Gastrocnemius medialis (tissue), 4 donors: ENCODE measurements at regions of chr7 and their contacts with region 1.

Region 1: DNA sequence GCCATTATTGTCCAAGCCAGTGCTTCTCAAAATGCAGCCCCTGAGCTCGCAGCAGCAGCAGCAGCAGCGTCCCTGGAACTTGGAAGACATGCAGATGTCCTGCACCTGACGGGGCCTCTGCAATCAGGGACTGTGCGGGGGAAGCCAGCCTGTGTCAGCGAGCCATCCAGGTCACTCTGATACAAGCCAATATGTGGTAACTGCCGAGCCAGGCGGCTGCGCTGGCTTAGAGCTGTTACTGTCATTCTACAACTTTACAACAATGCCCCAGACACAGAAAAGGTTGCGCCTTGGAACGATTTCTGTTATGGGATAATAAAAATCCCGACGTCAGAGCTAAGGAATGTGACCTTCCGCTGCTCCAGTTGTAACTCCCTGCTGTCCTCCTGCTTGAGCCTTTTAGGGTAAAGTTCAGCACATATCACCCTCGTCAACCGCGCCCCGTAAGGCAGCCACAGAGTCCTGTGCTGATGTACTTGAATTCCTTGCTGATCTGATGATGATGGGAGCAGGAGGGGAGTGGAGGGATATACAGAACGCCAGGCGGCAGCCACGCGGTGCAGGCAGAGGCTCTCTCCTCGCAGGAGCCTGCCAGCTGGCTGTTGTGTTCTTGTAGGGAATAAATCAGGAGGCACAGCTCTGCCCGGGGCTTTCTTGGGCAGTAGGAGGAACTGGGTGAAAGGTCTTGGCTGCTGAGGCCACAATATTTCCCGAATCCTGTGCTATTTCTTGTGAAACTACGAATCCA is 20.0 kb upstream of the CRYGN start:
- DNase-seq: peak; percentile 87 to 91
- ATAC-seq: peak; percentile 83 to 84
- H3K4me3 ChIP-seq: peak overlapping the region; percentile 32 to 47 (median 36)
- H3K27ac ChIP-seq: peak overlapping the region; percentile 91 to 94 (median 92)
- H3K4me1 ChIP-seq: peaks cover 23 to 46% of the 10 kb centered on the region in 2 donors
- H3K27me3 ChIP-seq: no peaks in the 10 kb centered on the region
- CTCF ChIP-seq: peak in 2 of 5 experiments; percentile 25 to 45
- POLR2A ChIP-seq: peak; percentile 13 to 42

Region 2: DNA sequence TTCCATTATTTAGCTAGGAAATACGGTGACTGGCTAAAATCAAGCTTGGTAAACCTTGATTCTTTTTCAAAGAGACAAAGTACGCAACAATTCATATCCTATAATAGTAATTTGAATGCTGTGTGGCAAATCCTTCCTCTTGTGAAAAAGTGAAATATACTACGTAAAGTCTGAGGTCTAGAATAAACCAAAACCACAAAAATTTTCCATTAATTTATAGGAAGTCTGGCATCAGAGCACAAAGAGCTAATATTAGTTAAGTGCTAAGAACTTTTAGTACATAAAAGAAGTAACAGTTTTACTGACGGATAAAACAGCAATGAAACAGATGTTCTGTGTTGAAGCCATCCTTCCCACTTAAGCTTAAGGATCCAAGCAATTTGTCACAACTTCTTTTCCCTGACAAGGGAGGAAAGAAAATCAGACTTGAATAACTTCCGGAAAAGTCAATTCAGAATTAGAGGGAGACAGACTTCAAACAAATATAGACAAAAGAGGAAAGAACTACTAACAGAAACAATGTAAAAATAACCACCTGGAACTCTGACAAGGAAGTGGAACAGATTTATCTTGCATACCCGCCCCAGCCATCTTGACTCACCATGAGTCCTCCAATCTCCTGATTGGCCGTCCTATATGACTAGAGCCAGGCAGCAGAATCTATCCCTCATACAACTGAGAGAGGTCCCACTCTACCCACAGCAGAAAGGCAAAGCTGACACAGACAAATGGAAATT is 25.2 kb after region 1 on chr7:
- in situ Hi-C with region 1: no loop called
- intact Hi-C with region 1: no loop called
- DNase-seq: no peak
- ATAC-seq: peak; percentile 32 to 51
- H3K4me3 ChIP-seq: no peak overlapping the region
- H3K27ac ChIP-seq: peak overlapping the region; percentile 47 to 72 (median 66)
- H3K4me1 ChIP-seq: peaks cover 32 to 38% of the 10 kb centered on the region in 2 donors
- H3K27me3 ChIP-seq: no peaks in the 10 kb centered on the region
- CTCF ChIP-seq: no peak
- POLR2A ChIP-seq: no peak

Region 3: DNA sequence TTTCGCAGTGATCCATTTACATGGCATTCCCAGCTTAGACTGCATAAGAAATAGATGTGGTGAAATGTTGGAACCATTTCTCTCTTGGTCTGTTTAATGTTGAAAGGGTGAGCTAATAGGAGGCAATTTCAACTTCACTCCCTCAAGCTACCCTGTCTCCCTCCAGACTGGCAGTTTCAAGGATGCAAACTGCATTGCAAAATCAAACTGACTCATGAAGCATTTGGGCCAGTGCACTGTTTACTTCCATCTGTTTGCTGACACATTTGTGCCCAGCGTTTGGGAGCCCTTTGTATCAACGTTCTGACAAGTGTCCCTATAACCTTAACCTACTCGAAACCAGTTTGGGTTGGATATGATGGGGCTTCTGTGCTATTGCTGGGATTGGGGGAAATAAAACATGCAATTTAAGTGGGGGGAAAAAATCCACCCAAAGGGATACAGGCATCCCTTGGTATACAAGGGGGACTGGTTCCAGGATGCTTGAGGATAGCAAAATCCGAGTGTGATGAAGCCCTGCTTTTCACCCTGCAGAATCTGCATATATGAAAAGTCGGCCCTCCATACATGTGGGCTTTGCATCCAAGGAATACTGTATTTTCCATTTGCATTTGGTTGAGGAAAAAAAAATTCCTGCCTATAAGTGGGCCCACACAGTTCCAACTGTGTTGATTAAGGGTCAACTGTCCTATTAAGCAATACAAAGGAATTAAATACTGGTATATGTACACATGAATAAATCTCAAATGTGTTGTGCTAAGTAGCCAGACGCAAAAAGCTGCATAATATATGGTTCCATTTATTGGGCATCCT is 44.2 kb after region 1 on chr7:
- in situ Hi-C with region 1: no loop called
- intact Hi-C with region 1: loop called (anchors 2 kb)
- DNase-seq: peak; percentile 78 to 80
- ATAC-seq: peak; percentile 89 to 93
- H3K4me3 ChIP-seq: no peak overlapping the region
- H3K27ac ChIP-seq: peak overlapping the region; percentile 77 to 98 (median 88)
- H3K4me1 ChIP-seq: peaks cover 84 to 89% of the 10 kb centered on the region in 2 donors
- H3K27me3 ChIP-seq: no peaks in the 10 kb centered on the region
- CTCF ChIP-seq: no peak
- POLR2A ChIP-seq: peak in 1 of 2 donors; percentile 59

Region 4: GRCh38 chr7:151631968-151632749 is 172.3 kb after region 1 on chr7:
- in situ Hi-C with region 1: no loop called
- intact Hi-C with region 1: loop called (anchors 5 kb)
- DNase-seq: peak; percentile 46 to 66
- ATAC-seq: peak; percentile 77 to 80
- H3K4me3 ChIP-seq: peak overlapping the region; percentile 54 to 71 (median 63)
- H3K27ac ChIP-seq: peak overlapping the region; percentile 70 to 84 (median 78)
- H3K4me1 ChIP-seq: peaks cover 8 to 13% of the 10 kb centered on the region in 2 donors
- H3K27me3 ChIP-seq: no peaks in the 10 kb centered on the region
- CTCF ChIP-seq: peak in 3 of 5 experiments; percentile 30 to 38 (median 31)
- POLR2A ChIP-seq: peak; percentile 52 to 62

Region 5: DNA sequence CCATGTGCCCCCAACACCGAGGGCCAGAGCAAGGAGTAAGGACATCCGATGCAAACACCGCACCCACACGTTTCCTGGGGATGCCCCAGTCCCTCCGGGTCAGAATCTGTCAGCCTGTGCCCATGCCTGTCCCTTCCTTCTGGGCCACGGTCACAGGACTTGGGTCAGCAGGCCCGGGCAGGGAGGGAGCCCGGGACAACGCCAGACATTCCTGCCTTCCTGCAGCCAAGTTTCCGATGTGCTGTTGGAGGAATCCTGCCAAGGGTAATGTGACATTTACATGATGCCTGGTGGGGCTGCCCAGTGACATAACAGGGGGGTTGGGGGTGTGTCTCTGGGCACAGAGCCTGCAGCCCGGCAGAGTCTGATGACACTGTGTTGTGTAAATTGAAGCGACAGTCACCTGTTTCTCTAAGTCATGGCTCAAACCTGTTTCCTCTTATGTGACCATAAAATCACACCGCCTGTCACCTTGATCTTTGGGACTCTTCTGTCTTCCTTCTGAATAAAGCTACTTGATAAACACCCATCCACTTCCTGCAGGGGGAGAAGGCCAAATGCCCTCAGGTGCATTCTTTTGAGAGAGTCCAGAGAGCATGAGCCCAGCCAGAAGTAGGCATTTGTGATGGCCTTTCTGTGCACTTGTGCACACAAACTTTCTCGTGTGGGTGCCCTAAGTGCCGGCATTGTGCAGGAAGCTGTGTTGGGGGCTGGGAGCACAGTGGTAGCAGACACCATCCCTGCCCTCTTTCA is 235.1 kb after region 1 on chr7:
- in situ Hi-C with region 1: no loop called
- intact Hi-C with region 1: loop called (anchors 5 kb)
- DNase-seq: peak; percentile 94 to 98
- ATAC-seq: peak; percentile 90 to 93
- H3K4me3 ChIP-seq: no peak overlapping the region
- H3K27ac ChIP-seq: peak overlapping the region; percentile 80 to 93 (median 91)
- H3K4me1 ChIP-seq: peaks cover 16 to 19% of the 10 kb centered on the region in 2 donors
- H3K27me3 ChIP-seq: no peaks in the 10 kb centered on the region
- CTCF ChIP-seq: peak in 3 of 5 experiments; percentile 7 to 59 (median 30)
- POLR2A ChIP-seq: peak; percentile 4 to 52

Region 6: GRCh38 chr7:151705636-151706276 is 245.9 kb after region 1 on chr7:
- in situ Hi-C with region 1: no loop called
- intact Hi-C with region 1: loop called (anchors 5 kb)
- DNase-seq: peak; percentile 75 to 91
- ATAC-seq: peak; percentile 73 to 83
- H3K4me3 ChIP-seq: peak overlapping the region in 1 of 4 donors; percentile 11
- H3K27ac ChIP-seq: peak overlapping the region; percentile 57 to 73 (median 69)
- H3K4me1 ChIP-seq: peaks cover 29 to 33% of the 10 kb centered on the region in 2 donors
- H3K27me3 ChIP-seq: no peaks in the 10 kb centered on the region
- CTCF ChIP-seq: peak; percentile 38 to 60 (median 53)
- POLR2A ChIP-seq: peak in 1 of 2 donors; percentile 37

Region 7: GRCh38 chr7:151727579-151728285 is 267.8 kb after region 1 on chr7:
- in situ Hi-C with region 1: loop called in 1 of 4 experiments (anchors 25 kb)
- intact Hi-C with region 1: no loop called
- DNase-seq: peak; percentile 64 to 86
- ATAC-seq: peak; percentile 64 to 87
- H3K4me3 ChIP-seq: no peak overlapping the region
- H3K27ac ChIP-seq: peak overlapping the region; percentile 8 to 41 (median 28)
- H3K4me1 ChIP-seq: peaks cover 0 to 4% of the 10 kb centered on the region in 2 donors
- H3K27me3 ChIP-seq: no peaks in the 10 kb centered on the region
- CTCF ChIP-seq: no peak
- POLR2A ChIP-seq: no peak

Region 8: GRCh38 chr7:151754142-151754590 is 294.3 kb after region 1 on chr7:
- in situ Hi-C with region 1: loop called in 1 of 4 experiments (anchors 25 kb)
- intact Hi-C with region 1: loop called (anchors 2 kb)
- DNase-seq: peak; percentile 76 to 86
- ATAC-seq: peak; percentile 97 to 99
- H3K4me3 ChIP-seq: no peak overlapping the region
- H3K27ac ChIP-seq: peak overlapping the region; percentile 41 to 60 (median 50)
- H3K4me1 ChIP-seq: peaks cover 17 to 20% of the 10 kb centered on the region in 2 donors
- H3K27me3 ChIP-seq: no peaks in the 10 kb centered on the region
- CTCF ChIP-seq: peak; percentile 84 to 92 (median 90)
- POLR2A ChIP-seq: no peak